Heart right ventricle (tissue), 16 donors: ENCODE measurements at regions of chr2 and their contacts with region 1.

Region 1: GRCh38 chr2:67384123-67384822 is 12.9 kb upstream of the ETAA1 start:
- DNase-seq: no peak
- ATAC-seq: no peak
- H3K4me3 ChIP-seq: no peak overlapping the region
- H3K27ac ChIP-seq: no peak overlapping the region
- H3K4me1 ChIP-seq: no peaks in the 10 kb centered on the region
- H3K27me3 ChIP-seq: no peaks in the 10 kb centered on the region
- CTCF ChIP-seq: no peak

Region 2: GRCh38 chr2:67397143-67397986 is 13.1 kb after region 1 on chr2 and contains the start of gene ETAA1:
- intact Hi-C with region 1: loop called in 1 of 10 experiments (anchors 2 kb)
- DNase-seq: peak; percentile 94 to 95
- ATAC-seq: peak; percentile 100
- H3K4me3 ChIP-seq: peak within 1 kb of the TSS; percentile 66 to 99 (median 93)
- H3K27ac ChIP-seq: peak within 1 kb of the TSS; percentile 57 to 97 (median 89)
- H3K4me1 ChIP-seq: peaks cover 0 to 39% (median 20%) of the 10 kb centered on the region in 9 donors
- H3K27me3 ChIP-seq: no peaks in the 10 kb centered on the region
- CTCF ChIP-seq: peak in 1 of 9 donors; percentile 8
- total RNA-seq, gene ETAA1: 3.7 to 7.0 (median 5.4) TPM

Region 3: DNA sequence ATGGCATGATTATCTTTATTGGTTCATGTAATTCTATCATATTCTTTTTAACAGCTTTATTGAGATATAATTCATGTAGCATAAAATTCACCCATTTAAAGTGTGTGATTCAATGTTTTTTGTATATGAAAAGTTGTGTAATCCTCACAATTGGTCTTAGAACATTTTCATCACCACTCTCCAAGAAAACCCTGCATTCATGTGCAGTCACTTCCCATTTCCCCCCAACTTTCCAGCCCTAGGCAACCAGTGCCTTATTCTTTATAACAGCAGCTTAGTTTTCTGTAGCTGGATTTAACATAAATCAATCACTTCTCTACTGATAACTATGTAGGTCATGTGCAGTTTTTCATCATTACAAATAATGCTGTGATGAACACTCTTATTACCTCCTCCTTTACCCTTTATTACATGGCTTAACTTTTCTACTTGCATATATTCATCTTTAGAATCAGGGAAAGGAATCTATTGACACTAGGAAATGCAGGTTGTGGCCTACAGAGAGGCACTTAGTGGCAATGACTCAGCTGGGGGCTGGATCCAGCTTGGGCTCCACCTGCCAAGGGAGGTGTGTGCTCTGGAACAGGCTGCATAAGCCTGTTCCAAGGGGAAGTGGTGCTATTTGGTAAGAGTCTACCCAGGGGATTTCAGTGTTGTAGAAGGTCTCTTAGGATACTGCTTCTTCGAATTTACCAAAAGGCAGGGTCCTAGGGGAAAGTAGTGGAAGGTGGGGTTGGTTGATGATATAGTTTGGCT is 101.9 kb after region 1 on chr2:
- intact Hi-C with region 1: no loop called
- DNase-seq: peak in 1 of 2 donors; percentile 33
- ATAC-seq: peak in 6 of 8 donors; percentile 39 to 98 (median 76)
- H3K4me3 ChIP-seq: no peak overlapping the region
- H3K27ac ChIP-seq: no peak overlapping the region
- H3K4me1 ChIP-seq: peaks cover 0 to 11% (median 0%) of the 10 kb centered on the region in 9 donors
- H3K27me3 ChIP-seq: no peaks in the 10 kb centered on the region
- CTCF ChIP-seq: no peak